ENCODE measurements at regions of chr16 and their contacts with region 1.

Region 1: DNA sequence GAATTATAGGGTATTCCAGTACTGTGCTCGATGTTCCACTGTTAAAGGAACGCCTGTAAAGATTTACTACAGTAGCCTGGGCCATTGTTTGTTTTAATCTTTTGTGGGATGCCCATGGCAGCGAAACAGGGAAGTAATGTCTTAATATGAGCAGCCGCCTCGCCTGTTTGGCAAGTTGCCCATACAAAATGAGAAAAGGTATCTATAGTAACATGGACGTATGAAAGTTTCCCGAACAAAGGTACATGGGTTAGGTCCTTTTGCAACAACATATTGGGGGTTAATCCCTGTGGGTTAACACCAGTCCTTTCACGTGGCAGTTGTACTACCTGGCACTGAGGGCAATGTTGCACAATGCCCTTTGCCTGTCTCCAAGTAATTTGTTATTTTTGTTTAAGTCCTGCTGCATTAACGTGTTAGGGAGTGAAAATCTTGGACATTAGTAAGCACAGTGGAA is 21.1 kb upstream of the TMC5 start:
- DNase-seq: peak; percentile 80 to 96
- H3K4me3 ChIP-seq: peak overlapping the region; percentile 29; the same call in 1 of the 2 replicates
- H3K27ac ChIP-seq: peak overlapping the region; percentile 69
- H3K4me1 ChIP-seq: peaks cover 56% of the 10 kb centered on the region
- H3K27me3 ChIP-seq: no peaks in the 10 kb centered on the region
- CTCF ChIP-seq: no peak

Region 2: GRCh38 chr16:19432429-19432828 is 35.8 kb after region 1 on chr16:
- CTCF ChIA-PET with region 1: no interaction called
- POLR2A ChIA-PET with region 1: interaction called, 15 read pairs
- intact Hi-C with region 1: loop called (anchors 1 kb)
- DNase-seq: peak; percentile 49 to 98
- H3K4me3 ChIP-seq: no peak overlapping the region
- H3K27ac ChIP-seq: peak overlapping the region; percentile 87
- H3K4me1 ChIP-seq: peaks cover 22% of the 10 kb centered on the region
- H3K27me3 ChIP-seq: no peaks in the 10 kb centered on the region
- CTCF ChIP-seq: no peak

Measured in PC-9 (cell line).